ENCODE measurements at regions of chr9 and their contacts with region 1.

Region 1: GRCh38 chr9:131641618-131642495 is 96.5 kb downstream of the PRRT1B start:
- DNase-seq: no peak
- H3K4me3 ChIP-seq: no peak overlapping the region
- H3K27ac ChIP-seq: no peak overlapping the region
- H3K4me1 ChIP-seq: no peaks in the 10 kb centered on the region
- CTCF ChIP-seq: no peak

Region 2: GRCh38 chr9:131656356-131657036 is 14.6 kb after region 1 on chr9:
- CTCF ChIA-PET with region 1: no interaction called
- POLR2A ChIA-PET with region 1: interaction called, 12 read pairs
- intact Hi-C with region 1: no loop called
- DNase-seq: peak; percentile 93
- H3K4me3 ChIP-seq: peak overlapping the region; percentile 51
- H3K27ac ChIP-seq: peak overlapping the region; percentile 95
- H3K4me1 ChIP-seq: peaks cover 100% of the 10 kb centered on the region
- CTCF ChIP-seq: no peak

Measured in OCI-LY7 (cell line).